ENCODE measurements at regions of chr9 and their contacts with region 1.

Region 1: GRCh38 chr9:92325269-92325990 is at the starts of genes CENPP and NOL8:
- DNase-seq: peak; percentile 81
- H3K4me3 Mint-ChIP-seq: peak within 1 kb of the TSS; percentile 93
- H3K27ac Mint-ChIP-seq: peak within 1 kb of the TSS; percentile 96
- H3K4me1 Mint-ChIP-seq: peaks cover 32% of the 10 kb centered on the region
- H3K27me3 Mint-ChIP-seq: no peaks in the 10 kb centered on the region
- total RNA-seq, gene CENPP: 24.6 and 26.0 TPM in 2 replicates
- total RNA-seq, gene NOL8: 84.4 and 95.5 TPM in 2 replicates

Region 2: GRCh38 chr9:92115071-92115858 is 210.2 kb before region 1 on chr9 and contains the start of gene SPTLC1:
- intact Hi-C with region 1: loop called (anchors 1 kb)
- DNase-seq: peak; percentile 93
- H3K4me3 Mint-ChIP-seq: peak within 1 kb of the TSS; percentile 97
- H3K27ac Mint-ChIP-seq: peak within 1 kb of the TSS; percentile 95
- H3K4me1 Mint-ChIP-seq: peaks cover 47% of the 10 kb centered on the region
- H3K27me3 Mint-ChIP-seq: no peaks in the 10 kb centered on the region
- total RNA-seq, gene SPTLC1: 60.2 and 62.3 TPM in 2 replicates

Region 3: GRCh38 chr9:92208693-92209524 is 116.5 kb before region 1 on chr9:
- intact Hi-C with region 1: no loop called
- DNase-seq: no peak
- H3K4me3 Mint-ChIP-seq: no peak overlapping the region
- H3K27ac Mint-ChIP-seq: no peak overlapping the region
- H3K4me1 Mint-ChIP-seq: no peaks in the 10 kb centered on the region
- H3K27me3 Mint-ChIP-seq: no peaks in the 10 kb centered on the region

Region 4: GRCh38 chr9:92276331-92277032 is 48.9 kb before region 1 on chr9:
- intact Hi-C with region 1: loop called (anchors 1 kb)
- DNase-seq: no peak
- H3K4me3 Mint-ChIP-seq: peak overlapping the region; percentile 61
- H3K27ac Mint-ChIP-seq: peak overlapping the region; percentile 75
- H3K4me1 Mint-ChIP-seq: peaks cover 36% of the 10 kb centered on the region
- H3K27me3 Mint-ChIP-seq: no peaks in the 10 kb centered on the region

Region 5: DNA sequence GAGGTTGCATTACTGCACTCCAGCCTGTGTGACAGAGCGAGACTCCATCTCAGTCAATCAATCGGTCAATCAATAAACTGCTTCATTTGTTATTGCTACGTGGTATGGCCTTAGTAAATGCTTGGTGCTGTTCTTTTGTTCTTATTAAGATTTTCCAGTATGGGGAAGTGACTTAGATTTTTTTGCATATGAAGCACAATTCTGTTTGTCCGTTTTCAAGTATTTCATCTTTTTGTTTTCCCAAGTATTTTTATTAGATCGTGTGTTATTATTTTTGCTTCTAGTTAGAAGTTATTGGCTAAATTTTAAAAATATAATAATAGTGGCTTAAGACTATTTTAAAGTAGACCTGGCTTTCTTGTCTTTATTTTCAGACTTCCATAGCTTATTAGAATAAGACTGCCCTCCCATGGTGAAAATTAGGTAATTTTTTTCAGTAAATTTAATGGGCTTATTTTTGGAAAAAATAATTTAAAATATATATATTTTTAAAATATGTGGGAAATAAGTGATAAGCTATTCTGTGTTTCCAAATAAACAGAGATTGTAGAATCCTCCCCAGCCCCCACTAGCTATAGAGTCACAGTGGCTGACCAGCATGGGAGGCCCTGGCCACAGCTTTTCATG is 113.6 kb after region 1 on chr9:
- intact Hi-C with region 1: loop called (anchors 1 kb)
- DNase-seq: no peak
- H3K4me3 Mint-ChIP-seq: no peak overlapping the region
- H3K27ac Mint-ChIP-seq: no peak overlapping the region
- H3K4me1 Mint-ChIP-seq: peaks cover 5% of the 10 kb centered on the region
- H3K27me3 Mint-ChIP-seq: peaks cover 4% of the 10 kb centered on the region

Region 6: GRCh38 chr9:92455217-92455616 is 129.8 kb after region 1 on chr9:
- intact Hi-C with region 1: loop called (anchors 1 kb)
- DNase-seq: no peak
- H3K4me3 Mint-ChIP-seq: no peak overlapping the region
- H3K27ac Mint-ChIP-seq: no peak overlapping the region
- H3K4me1 Mint-ChIP-seq: no peaks in the 10 kb centered on the region
- H3K27me3 Mint-ChIP-seq: no peaks in the 10 kb centered on the region

Region 7: DNA sequence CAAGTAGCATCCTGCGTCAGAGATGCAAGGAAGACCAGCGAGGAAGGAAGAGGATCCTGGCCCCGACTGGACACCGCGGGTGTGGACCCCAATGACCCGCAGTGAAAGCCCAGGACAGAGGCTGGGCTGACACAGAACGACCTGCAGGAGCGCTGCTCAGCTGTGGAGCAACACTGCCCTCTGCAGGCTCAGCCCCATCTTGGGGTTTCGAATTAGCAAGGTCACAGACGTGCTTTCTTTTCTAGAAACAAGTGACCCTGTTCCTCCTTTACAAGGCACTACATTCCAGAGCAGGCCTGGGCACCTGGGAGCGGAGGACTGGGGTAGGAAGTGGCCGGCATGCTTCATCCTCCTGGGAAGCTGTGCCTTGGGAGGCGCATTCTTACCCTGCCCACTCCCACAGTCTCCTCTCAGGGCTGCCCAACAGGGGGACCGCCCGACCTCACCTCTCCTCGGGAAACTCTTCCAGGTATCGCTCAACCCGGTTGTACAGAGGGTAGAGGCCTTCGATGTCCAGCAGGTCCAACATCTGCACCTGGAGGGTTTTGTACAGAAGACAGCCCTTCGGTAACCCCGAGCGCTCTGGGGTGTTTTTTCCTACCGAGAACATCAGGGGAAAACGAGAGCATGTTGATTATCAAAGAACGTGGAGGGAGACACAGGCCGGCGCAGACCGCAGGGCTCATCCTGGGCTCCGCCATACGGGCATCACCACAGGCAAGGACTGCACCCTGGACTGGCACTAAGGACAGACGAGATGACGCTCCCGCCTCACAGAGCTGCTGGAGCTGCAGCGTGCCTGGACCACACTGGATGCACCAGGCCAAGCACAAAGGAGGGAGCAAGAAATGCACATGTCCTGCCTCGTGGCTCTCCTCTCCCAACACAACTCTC is 309.5 kb after region 1 on chr9:
- intact Hi-C with region 1: loop called (anchors 1 kb)
- DNase-seq: peak; percentile 43
- H3K4me3 Mint-ChIP-seq: no peak overlapping the region
- H3K27ac Mint-ChIP-seq: peak overlapping the region; percentile 71
- H3K4me1 Mint-ChIP-seq: peaks cover 24% of the 10 kb centered on the region
- H3K27me3 Mint-ChIP-seq: no peaks in the 10 kb centered on the region

Region 8: GRCh38 chr9:92706216-92706940 is 380.9 kb after region 1 on chr9:
- intact Hi-C with region 1: loop called (anchors 1 kb)
- DNase-seq: peak; percentile 32
- H3K4me3 Mint-ChIP-seq: no peak overlapping the region
- H3K27ac Mint-ChIP-seq: peak overlapping the region; percentile 9
- H3K4me1 Mint-ChIP-seq: peaks cover 21% of the 10 kb centered on the region
- H3K27me3 Mint-ChIP-seq: no peaks in the 10 kb centered on the region